ENCODE measurements at regions of chr16 and their contacts with region 1.

Region 1: GRCh38 chr16:1194665-1195392 is 30.2 kb downstream of the TPSG1 start:
- DNase-seq: peak in 1 of 2 experiments; percentile 83
- H3K4me3 ChIP-seq: no peak overlapping the region
- H3K27ac ChIP-seq: no peak overlapping the region
- H3K4me1 ChIP-seq: peaks cover 0 to 9% (median 2%) of the 10 kb centered on the region in 4 experiments; a peak in 4 of 7 replicates
- H3K27me3 ChIP-seq: no peaks in the 10 kb centered on the region
- CTCF ChIP-seq: peak; percentile 73 to 78 (median 74)
- EP300 ChIP-seq: no peak
- POLR2A ChIP-seq: no peak
- RAD21 ChIP-seq: peak; percentile 74 to 84

Region 2: DNA sequence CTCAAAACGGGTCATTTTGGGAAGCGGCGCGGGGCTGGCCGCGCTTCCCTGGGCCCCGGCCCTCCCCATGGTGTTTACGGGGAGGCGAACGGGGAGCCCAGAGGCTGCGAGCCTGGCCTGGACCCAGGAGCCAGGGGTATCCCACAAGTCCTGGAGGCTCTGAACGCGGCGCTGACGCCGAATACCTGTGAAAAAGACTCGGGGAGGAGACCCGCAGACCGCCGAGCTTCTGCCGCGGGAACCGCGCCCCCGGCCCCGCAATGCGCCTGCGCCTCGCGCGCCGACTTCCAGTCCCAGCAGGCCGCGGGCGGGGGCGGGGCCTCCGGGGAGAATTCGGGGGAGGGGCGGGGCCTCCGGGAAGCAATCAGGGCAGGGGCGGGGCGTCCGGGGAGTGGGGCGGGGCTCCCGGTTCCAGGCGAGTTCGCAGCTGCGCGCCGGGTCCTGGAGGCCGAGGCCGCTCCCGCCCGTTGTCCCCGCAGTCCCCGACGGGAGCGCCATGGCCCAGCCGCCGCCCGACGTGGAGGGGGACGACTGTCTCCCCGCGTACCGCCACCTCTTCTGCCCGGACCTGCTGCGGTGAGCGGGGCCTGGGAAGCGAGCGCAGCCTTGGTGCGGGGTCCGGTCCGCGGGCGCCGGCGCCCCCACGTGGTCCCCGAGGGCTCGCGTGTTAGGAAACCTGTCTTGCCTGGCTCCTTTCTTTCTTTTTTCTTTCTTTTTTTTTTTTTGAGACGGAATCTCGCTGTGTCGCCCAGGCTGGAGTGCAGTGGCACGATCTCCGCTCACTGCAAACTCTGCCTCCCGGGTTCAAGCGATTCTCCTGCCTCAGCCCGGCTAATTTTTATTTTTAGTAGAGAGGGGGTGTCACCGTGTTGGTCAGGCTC is 793.1 kb before region 1 on chr16 and contains the start of gene DECR2:
- CTCF ChIA-PET with region 1: no interaction called
- POLR2A ChIA-PET with region 1: no interaction called
- DNase-seq: peak; percentile 68 to 98
- H3K4me3 ChIP-seq: peak within 1 kb of the TSS; percentile 61 to 71 (median 68)
- H3K27ac ChIP-seq: peak within 1 kb of the TSS; percentile 63; the same call in 1 of the 2 replicates
- H3K4me1 ChIP-seq: peaks cover 0 to 20% (median 11%) of the 10 kb centered on the region in 4 experiments; a peak in 6 of 7 replicates
- H3K27me3 ChIP-seq: no peaks in the 10 kb centered on the region
- CTCF ChIP-seq: peak; percentile 9 to 25 (median 12); a peak in 3 of 4 replicates
- EP300 ChIP-seq: no peak
- POLR2A ChIP-seq: peak; percentile 69 to 87
- RAD21 ChIP-seq: peak; percentile 24 to 28; a peak in 3 of 4 replicates
- total RNA-seq, gene DECR2: 28.2 and 30.6 TPM in 2 replicates

Region 3: DNA sequence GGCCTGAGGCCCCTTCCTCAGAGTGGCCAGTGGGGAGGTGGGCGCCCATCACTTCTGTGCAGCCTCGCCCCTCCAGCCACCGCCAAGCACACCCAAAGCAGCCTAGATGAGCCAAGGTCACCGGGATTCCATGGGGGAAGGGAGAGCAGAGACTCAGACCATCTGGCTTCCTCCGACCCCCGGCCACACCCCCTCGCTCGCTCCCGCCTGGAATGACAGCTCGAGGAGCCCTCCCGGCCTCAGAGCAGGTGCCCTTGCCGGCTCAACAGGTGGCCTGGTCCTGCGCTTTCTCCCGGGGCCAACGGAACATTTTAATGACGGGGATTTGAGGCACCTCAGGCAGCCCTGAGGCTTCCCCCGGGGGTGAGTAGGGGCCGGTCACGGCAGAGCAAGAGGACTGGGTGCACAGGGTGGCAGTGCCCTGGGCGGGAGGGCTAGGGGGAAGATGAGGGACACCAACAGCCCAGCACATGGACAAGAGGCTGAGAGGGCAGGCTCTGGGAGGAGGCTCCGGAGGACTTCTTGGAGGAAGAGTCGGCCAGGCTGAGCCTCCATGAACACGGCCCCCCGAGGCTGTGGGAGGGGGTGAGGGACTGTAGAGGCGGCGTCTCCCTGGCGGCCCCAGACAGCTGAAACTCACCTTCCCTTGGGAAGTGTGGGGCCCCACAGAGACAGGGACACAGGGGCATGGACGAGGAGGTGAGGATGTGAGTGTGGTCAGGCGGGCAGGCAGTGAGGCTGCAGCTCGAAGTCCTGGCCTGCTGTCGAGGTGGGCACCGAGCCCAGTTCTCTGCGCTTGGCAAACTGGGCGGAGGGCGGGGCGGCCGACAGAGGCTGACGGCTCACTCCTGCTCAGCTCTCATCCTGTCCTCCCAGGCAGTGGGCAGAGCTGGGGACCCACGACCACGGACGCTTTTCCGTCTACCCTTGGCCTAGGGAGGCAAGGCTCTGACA is 86.3 kb before region 1 on chr16:
- CTCF ChIA-PET with region 1: interaction called, 12 read pairs
- POLR2A ChIA-PET with region 1: interaction called, 3 read pairs
- DNase-seq: no peak
- H3K4me3 ChIP-seq: no peak overlapping the region
- H3K27ac ChIP-seq: no peak overlapping the region
- H3K4me1 ChIP-seq: peaks cover 0 to 6% (median under 1%) of the 10 kb centered on the region in 4 experiments; a peak in 4 of 7 replicates
- H3K27me3 ChIP-seq: peaks cover 0 to 12% (median 7%) of the 10 kb centered on the region in 4 experiments; a peak in 5 of 7 replicates
- CTCF ChIP-seq: no peak
- EP300 ChIP-seq: no peak
- POLR2A ChIP-seq: no peak
- RAD21 ChIP-seq: no peak

Region 4: DNA sequence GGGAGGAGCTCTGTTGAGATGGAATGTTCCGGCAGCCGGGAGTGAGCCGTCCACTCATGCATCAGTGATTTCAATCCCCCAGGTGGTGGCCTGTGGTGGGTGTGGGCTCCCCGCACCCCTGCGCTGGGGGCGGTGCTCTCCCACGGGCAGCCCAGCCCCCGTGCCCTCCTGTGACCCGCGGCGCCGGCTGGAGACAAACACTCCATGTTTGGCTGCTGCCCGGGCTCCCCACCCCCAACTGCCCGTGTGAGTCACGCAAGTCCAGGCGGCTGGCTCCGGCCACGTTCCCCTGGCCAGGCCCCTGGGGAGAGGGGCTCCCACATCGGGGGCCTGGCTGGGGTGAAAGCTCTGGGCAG is 12.5 kb before region 1 on chr16:
- CTCF ChIA-PET with region 1: interaction called, 16 read pairs
- POLR2A ChIA-PET with region 1: no interaction called
- DNase-seq: no peak
- H3K4me3 ChIP-seq: no peak overlapping the region
- H3K27ac ChIP-seq: no peak overlapping the region
- H3K4me1 ChIP-seq: peaks cover 0 to 3% (median under 1%) of the 10 kb centered on the region in 4 experiments; a peak in 4 of 7 replicates
- H3K27me3 ChIP-seq: no peaks in the 10 kb centered on the region
- CTCF ChIP-seq: no peak
- EP300 ChIP-seq: no peak
- POLR2A ChIP-seq: no peak
- RAD21 ChIP-seq: no peak

Region 5: GRCh38 chr16:1206326-1206725 is 11.5 kb after region 1 on chr16:
- CTCF ChIA-PET with region 1: interaction called, 10 read pairs
- POLR2A ChIA-PET with region 1: no interaction called
- DNase-seq: no peak
- H3K4me3 ChIP-seq: no peak overlapping the region
- H3K27ac ChIP-seq: no peak overlapping the region
- H3K4me1 ChIP-seq: no peaks in the 10 kb centered on the region
- H3K27me3 ChIP-seq: no peaks in the 10 kb centered on the region
- CTCF ChIP-seq: peak in 2 of 3 experiments; percentile 7 to 27; a peak in 1 of 4 replicates
- EP300 ChIP-seq: no peak
- POLR2A ChIP-seq: no peak
- RAD21 ChIP-seq: no peak; a peak in 1 of 4 replicates

Region 6: DNA sequence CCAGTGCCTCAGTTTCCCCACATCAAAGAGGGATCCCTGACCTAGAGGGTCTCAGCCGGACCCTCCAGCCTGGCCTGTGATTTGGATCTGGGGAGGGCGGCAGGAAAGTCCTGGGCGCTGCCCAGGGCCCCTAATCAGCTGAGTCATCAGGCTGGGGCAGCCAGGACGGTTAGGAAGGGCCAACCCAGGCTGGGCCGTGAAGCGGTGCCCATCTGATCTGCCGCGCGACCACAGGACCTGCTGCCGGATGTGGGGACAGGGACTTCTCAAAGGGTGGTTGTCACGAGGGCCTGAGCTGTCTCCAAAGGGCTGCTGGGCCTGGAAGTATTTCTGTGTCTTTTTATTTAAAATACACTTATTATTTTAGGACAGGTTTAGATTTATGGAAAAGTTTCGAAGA is 50.1 kb after region 1 on chr16:
- CTCF ChIA-PET with region 1: no interaction called
- POLR2A ChIA-PET with region 1: no interaction called
- DNase-seq: no peak
- H3K4me3 ChIP-seq: no peak overlapping the region
- H3K27ac ChIP-seq: no peak overlapping the region
- H3K4me1 ChIP-seq: no peaks in the 10 kb centered on the region
- H3K27me3 ChIP-seq: peaks cover 0 to 11% (median 4%) of the 10 kb centered on the region in 4 experiments; a peak in 3 of 7 replicates
- CTCF ChIP-seq: no peak
- EP300 ChIP-seq: no peak
- POLR2A ChIP-seq: no peak
- RAD21 ChIP-seq: no peak

Measured in H1 (cell line).